Activated T-helper 1 cell treated with anti-CD3 and anti-CD28 coated beads, Interleukin-12 subunit alpha, Interleukin-12 subunit beta, Interleukin-2, Interleukin-4 antibody, amounts not matched to agents 30 ng/mL and 10 ng/mL and 1 ng/mL, durations not matched to agents 14 hours and 24 hours and 36 hours (primary cell): ENCODE measurements at regions of chr3 and their contacts with region 1.

Region 1: GRCh38 chr3:149086232-149086988 is at the start of gene HLTF:
- DNase-seq: peak; percentile 87
- H3K4me3 Mint-ChIP-seq: peak within 1 kb of the TSS; percentile 90
- H3K27ac Mint-ChIP-seq: peak within 1 kb of the TSS; percentile 87
- H3K4me1 Mint-ChIP-seq: peaks cover 27% of the 10 kb centered on the region
- H3K27me3 Mint-ChIP-seq: no peaks in the 10 kb centered on the region
- total RNA-seq, gene HLTF: 19.7 and 22.6 TPM in 2 replicates

Region 2: GRCh38 chr3:148943506-148944205 is 142.8 kb before region 1 on chr3:
- intact Hi-C with region 1: loop called (anchors 5 kb)
- DNase-seq: peak; percentile 16
- H3K4me3 Mint-ChIP-seq: no peak overlapping the region
- H3K27ac Mint-ChIP-seq: no peak overlapping the region
- H3K4me1 Mint-ChIP-seq: no peaks in the 10 kb centered on the region
- H3K27me3 Mint-ChIP-seq: peaks cover 11% of the 10 kb centered on the region

Region 3: GRCh38 chr3:148955544-148956346 is 130.7 kb before region 1 on chr3:
- intact Hi-C with region 1: loop called (anchors 5 kb)
- DNase-seq: no peak
- H3K4me3 Mint-ChIP-seq: no peak overlapping the region
- H3K27ac Mint-ChIP-seq: no peak overlapping the region
- H3K4me1 Mint-ChIP-seq: peaks cover 10% of the 10 kb centered on the region
- H3K27me3 Mint-ChIP-seq: peaks cover 18% of the 10 kb centered on the region

Region 4: GRCh38 chr3:149042789-149043386 is 43.5 kb before region 1 on chr3:
- intact Hi-C with region 1: loop called (anchors 1 kb)
- DNase-seq: no peak
- H3K4me3 Mint-ChIP-seq: peak overlapping the region; percentile 1
- H3K27ac Mint-ChIP-seq: peak overlapping the region; percentile 7
- H3K4me1 Mint-ChIP-seq: peaks cover 28% of the 10 kb centered on the region
- H3K27me3 Mint-ChIP-seq: no peaks in the 10 kb centered on the region

Region 5: GRCh38 chr3:149120051-149120972 is 33.9 kb after region 1 on chr3:
- intact Hi-C with region 1: loop called (anchors 2 kb)
- DNase-seq: no peak
- H3K4me3 Mint-ChIP-seq: no peak overlapping the region
- H3K27ac Mint-ChIP-seq: no peak overlapping the region
- H3K4me1 Mint-ChIP-seq: peaks cover 5% of the 10 kb centered on the region
- H3K27me3 Mint-ChIP-seq: peaks cover 9% of the 10 kb centered on the region

Region 6: DNA sequence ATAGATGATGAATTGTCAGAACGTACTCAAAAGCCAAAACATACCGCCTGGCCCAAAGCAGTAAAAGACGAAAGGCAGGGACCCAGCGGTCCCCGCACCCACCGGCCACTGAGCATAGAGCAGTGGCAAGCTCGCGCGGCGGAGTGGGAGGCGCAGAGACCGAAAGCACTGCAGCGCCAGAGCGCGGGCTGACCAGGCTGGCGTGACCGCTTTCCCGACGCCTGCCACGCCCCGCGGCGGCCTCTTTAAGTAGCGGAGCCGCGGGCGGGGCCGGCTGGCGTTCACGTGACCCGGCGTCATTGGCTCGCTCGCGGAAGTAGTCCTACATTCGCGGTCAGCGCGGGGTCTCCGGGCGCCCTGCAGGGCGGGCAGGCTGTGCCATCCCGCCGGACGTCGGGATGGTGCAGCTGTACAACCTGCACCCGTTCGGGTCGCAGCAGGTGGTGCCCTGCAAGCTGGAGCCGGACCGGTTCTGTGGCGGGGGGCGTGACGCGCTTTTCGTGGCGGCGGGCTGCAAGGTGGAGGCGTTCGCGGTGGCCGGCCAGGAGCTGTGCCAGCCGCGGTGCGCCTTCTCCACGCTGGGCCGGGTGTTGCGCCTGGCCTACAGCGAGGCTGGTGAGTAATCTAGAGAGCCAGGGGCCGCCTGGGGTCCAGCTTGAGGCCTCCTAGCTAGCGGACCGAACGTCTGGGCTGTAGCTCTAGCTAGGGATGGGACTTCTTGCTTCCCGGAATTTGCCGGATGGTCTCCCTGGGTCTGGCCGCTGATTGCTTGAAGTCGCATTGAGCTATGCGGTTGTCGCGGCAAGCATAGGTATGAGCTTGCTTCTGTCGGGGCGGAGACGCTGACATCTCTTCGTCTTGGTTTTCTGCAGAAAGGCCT is 43.2 kb after region 1 on chr3 and contains the start of gene HPS3:
- intact Hi-C with region 1: loop called (anchors 1 kb)
- DNase-seq: peak; percentile 84
- H3K4me3 Mint-ChIP-seq: peak within 1 kb of the TSS; percentile 92
- H3K27ac Mint-ChIP-seq: peak within 1 kb of the TSS; percentile 88
- H3K4me1 Mint-ChIP-seq: peaks cover 39% of the 10 kb centered on the region
- H3K27me3 Mint-ChIP-seq: peaks cover 33% of the 10 kb centered on the region
- total RNA-seq, gene HPS3: 15.8 and 17.3 TPM in 2 replicates

Region 7: GRCh38 chr3:149224736-149225594 is 138.6 kb after region 1 on chr3:
- intact Hi-C with region 1: loop called (anchors 1 kb)
- DNase-seq: peak; percentile 46
- H3K4me3 Mint-ChIP-seq: peak overlapping the region; percentile 78
- H3K27ac Mint-ChIP-seq: peak overlapping the region; percentile 89
- H3K4me1 Mint-ChIP-seq: peaks cover 30% of the 10 kb centered on the region
- H3K27me3 Mint-ChIP-seq: peaks cover 2% of the 10 kb centered on the region